ENCODE measurements at regions of chr21 and their contacts with region 1.

Region 1: DNA sequence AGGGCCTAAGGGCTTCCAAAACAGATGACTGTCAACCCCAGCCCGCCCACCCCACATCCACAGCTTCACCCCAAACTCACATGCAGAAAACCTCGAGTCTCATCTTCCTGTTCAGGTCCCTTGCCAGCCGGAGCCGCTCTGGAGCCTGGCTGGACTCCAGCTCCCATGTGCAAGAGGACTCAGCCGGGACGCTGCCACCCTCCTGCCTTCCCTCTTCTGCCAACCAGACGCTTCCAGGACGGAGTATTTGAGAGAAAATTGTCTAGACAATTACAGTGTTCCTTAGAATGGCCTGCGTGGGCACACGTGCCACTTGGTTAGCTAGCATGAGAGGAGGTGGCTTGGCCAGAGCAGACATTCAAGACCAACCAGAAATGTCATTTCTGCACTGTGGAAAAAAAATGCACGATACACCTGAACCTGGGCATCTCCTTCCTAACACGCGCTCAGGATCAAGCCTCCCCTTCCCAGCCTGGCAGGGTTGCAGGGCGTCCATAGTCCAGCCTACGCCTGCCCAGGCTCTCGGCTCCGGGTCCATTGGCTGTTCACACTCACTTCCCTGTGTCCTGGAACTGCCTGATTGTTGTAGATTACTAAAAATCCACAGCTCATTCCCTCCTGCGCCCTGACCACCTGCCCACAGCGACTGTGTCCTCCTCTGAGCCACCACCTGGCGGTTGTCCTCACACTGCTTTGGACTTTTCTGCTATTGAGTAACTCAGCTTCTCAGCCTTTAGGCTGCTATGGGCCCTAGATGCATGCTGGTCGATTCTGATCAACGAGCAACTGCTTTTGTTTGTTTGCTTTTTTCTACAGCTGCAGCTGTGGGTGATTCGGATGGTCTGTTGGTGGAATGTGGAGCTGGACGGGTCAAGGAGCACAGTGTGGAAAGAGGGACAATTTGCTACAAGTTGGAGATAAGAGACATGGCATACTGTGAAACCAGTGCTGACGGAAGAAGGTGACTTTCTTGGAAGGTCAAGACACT is at the start of gene CLDN14:
- DNase-seq: peak; percentile 52 to 58
- H3K4me3 ChIP-seq: no peak within 1 kb of the TSS
- H3K4me3 Mint-ChIP-seq: no peak within 1 kb of the TSS
- H3K27ac Mint-ChIP-seq: peak within 1 kb of the TSS; percentile 28
- H3K4me1 ChIP-seq: peaks cover 28% of the 10 kb centered on the region
- H3K4me1 Mint-ChIP-seq: peaks cover 25% of the 10 kb centered on the region
- H3K27me3 ChIP-seq: no peaks in the 10 kb centered on the region
- H3K27me3 Mint-ChIP-seq: no peaks in the 10 kb centered on the region
- CTCF ChIP-seq: no peak
- total RNA-seq, gene CLDN14: not detected in 2 replicates

Region 2: GRCh38 chr21:36419996-36420395 is 59.7 kb before region 1 on chr21:
- CTCF ChIA-PET with region 1: no interaction called
- POLR2A ChIA-PET with region 1: no interaction called
- intact Hi-C with region 1: loop called (anchors 1 kb)
- DNase-seq: peak; percentile 77 to 80
- H3K4me3 ChIP-seq: no peak overlapping the region
- H3K4me3 Mint-ChIP-seq: no peak overlapping the region
- H3K27ac Mint-ChIP-seq: no peak overlapping the region
- H3K4me1 ChIP-seq: no peaks in the 10 kb centered on the region
- H3K4me1 Mint-ChIP-seq: no peaks in the 10 kb centered on the region
- H3K27me3 ChIP-seq: no peaks in the 10 kb centered on the region
- H3K27me3 Mint-ChIP-seq: no peaks in the 10 kb centered on the region
- CTCF ChIP-seq: peak; percentile 65 to 80